OCI-LY7 (cell line): ENCODE measurements at regions of chr2 and their contacts with region 1.

Region 1: DNA sequence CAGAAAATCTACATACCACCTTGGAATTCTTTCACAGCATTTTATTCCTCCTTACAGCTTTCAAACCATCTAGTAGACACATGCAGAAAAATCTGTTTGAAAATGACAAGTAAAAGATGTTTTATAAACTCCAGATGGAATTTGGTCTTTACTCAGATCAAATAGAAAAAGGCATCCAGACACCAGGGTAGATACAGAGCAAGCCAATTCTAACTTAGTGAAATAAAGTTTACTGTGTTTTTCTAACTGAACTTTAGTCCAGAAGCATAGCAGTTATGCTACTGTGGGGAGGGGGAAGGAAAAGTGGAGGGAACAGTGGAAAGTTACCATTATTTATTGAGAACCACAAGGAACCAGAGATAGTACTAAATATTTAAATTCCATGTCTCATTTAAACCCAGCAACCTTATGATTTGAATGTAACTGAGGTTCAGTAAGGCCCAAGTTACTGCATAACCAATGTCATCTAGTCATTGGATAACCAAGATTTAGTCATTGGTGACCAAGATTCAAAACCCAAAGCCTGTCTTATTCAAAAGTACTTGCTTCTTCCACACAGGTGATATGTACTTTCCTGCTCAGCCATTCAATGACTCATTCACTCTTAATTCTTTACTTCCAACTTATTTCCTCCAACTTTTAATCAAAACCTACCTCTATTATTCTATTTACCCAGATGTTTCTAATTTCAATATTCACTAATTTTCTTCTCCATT is 57.7 kb downstream of the RAD51AP2 start:
- DNase-seq: no peak
- H3K4me3 ChIP-seq: no peak overlapping the region
- H3K27ac ChIP-seq: peak overlapping the region; percentile 15
- H3K4me1 ChIP-seq: peaks cover 18% of the 10 kb centered on the region
- CTCF ChIP-seq: no peak

Region 2: DNA sequence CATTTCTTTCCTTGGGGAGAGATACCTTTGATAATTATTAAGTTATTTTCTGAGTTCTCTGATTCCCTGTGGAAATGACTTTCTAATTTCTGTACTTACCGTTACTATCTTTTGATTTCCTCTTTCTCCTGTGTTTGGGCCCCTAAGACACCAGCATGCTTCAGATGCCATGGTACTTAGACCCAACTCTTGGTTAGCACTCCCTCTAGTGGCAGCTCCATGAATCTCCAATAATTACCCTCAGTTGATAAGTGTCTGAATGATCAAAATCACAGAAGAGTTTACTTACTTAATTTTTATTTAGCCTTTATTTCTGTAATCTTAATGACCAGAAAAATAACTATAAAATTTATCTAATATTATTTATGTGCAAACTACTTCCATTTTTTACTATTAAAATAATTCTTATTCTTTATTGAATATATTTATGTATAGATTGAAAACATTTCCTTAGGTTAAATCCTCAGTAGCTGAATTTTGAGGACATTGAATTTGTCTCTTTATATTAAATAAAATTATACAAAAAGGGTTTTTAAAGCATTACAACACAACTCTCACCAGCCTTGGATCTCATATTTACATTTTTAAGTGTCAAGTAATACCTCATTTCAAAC is 718.3 kb after region 1 on chr2:
- CTCF ChIA-PET with region 1: no interaction called
- POLR2A ChIA-PET with region 1: no interaction called
- intact Hi-C with region 1: loop called (anchors 10 kb)
- DNase-seq: peak; percentile 68
- H3K4me3 ChIP-seq: no peak overlapping the region
- H3K27ac ChIP-seq: no peak overlapping the region
- H3K4me1 ChIP-seq: no peaks in the 10 kb centered on the region
- CTCF ChIP-seq: peak; percentile 95